Mammary epithelial cell (primary cell): ENCODE measurements at regions of chr6 and their contacts with region 1.

Region 1: GRCh38 chr6:170102582-170103481 is 188.0 kb downstream of the DLL1 start:
- DNase-seq: no peak
- H3K4me3 ChIP-seq: no peak overlapping the region
- H3K27ac ChIP-seq: no peak overlapping the region
- H3K4me1 ChIP-seq: no peaks in the 10 kb centered on the region
- H3K27me3 ChIP-seq: no peaks in the 10 kb centered on the region
- CTCF ChIP-seq: no peak

Region 2: DNA sequence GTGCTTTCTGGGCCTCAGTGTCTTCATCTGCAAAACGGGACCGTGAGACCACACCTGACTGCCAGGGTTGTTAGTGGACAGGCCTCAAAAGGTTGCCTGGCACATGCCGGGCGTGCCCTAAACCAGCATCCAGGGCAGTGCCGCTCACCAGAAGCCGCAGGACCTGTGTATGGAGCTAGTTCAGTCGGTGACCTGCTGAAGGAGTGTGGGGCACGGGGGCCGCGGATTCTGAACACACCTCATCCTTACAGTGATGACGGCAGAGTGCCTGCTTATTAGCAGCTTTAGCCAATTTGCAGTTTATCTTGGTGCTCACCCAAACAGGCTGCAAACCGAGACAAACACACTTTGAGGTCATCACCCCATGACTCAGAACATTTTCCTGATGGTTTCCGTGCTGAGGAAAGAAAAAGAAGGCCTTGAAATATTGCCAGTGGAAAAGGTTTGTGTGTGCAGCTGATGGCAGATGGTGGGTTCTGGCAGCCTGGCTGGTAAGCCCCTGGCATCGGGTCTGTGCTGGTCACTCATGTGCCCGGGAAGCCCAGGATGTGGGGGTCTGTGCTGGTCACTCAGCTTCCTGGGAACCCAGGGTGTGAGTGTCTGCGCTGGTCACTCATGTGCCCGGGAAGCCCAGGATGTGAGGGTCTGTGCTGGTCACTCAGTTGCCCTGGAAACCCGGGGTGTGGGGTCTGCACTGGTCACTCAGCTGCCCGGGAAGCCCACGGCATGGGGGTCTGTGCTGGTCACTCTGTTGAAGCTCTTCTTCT is 197.6 kb before region 1 on chr6:
- CTCF ChIA-PET with region 1: no interaction called
- dilution Hi-C with region 1: no loop called
- in situ Hi-C with region 1: no loop called
- intact Hi-C with region 1: no loop called
- DNase-seq: peak; percentile 41
- H3K4me3 ChIP-seq: no peak overlapping the region
- H3K27ac ChIP-seq: no peak overlapping the region
- H3K4me1 ChIP-seq: peaks cover 3% of the 10 kb centered on the region
- H3K27me3 ChIP-seq: no peaks in the 10 kb centered on the region
- CTCF ChIP-seq: no peak

Region 3: DNA sequence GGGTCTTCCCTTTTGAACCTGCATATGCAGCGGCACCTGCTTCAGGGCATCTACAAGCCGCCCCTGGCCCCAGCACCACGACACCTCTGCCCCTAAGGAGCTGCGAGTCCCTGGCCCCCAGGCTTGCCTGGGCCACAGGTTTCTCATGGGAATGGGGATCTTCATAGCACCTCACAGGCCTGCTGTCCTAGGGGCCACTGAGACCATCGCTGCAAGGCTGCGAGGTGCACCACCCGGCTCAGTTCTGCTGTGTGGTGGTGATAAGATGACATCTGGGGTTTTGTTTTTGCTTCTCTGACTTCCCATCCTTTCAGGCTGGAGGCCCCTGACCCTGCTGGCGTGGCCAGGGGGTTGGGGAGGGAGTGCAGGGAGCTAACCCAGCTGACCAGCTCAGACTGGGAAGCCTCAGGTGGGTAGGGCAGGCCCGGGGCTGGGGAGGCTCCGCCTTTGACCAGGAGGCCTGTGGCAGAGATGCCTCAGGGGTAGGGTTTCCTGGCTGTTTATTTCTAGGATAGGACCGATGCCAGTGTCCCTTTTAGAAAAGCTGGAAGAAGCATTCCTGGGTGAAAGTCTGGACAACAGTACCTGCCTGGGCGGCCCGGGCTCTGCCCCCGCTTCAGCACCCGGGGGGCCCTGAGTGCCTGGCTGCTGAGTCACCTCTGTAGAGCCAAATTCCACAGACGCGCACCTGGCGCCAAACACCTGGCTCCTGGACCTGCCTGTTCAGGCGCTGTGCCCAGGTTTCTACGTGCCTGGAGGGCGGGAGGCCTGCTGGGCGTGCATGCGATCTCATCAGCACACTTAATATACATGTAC is 76.7 kb before region 1 on chr6:
- CTCF ChIA-PET with region 1: no interaction called
- dilution Hi-C with region 1: loop called (anchors 5 kb)
- in situ Hi-C with region 1: no loop called
- intact Hi-C with region 1: no loop called
- DNase-seq: peak; percentile 96
- H3K4me3 ChIP-seq: no peak overlapping the region
- H3K27ac ChIP-seq: peak overlapping the region; percentile 74
- H3K4me1 ChIP-seq: peaks cover 25% of the 10 kb centered on the region
- H3K27me3 ChIP-seq: no peaks in the 10 kb centered on the region
- CTCF ChIP-seq: no peak

Region 4: GRCh38 chr6:170265655-170266054 is 162.8 kb after region 1 on chr6:
- CTCF ChIA-PET with region 1: no interaction called
- dilution Hi-C with region 1: loop called (anchors 5 kb)
- in situ Hi-C with region 1: no loop called
- intact Hi-C with region 1: no loop called
- DNase-seq: no peak
- H3K4me3 ChIP-seq: no peak overlapping the region
- H3K27ac ChIP-seq: no peak overlapping the region
- H3K4me1 ChIP-seq: no peaks in the 10 kb centered on the region
- H3K27me3 ChIP-seq: no peaks in the 10 kb centered on the region
- CTCF ChIP-seq: no peak